ENCODE measurements at regions of chr7 and their contacts with region 1.

Region 1: DNA sequence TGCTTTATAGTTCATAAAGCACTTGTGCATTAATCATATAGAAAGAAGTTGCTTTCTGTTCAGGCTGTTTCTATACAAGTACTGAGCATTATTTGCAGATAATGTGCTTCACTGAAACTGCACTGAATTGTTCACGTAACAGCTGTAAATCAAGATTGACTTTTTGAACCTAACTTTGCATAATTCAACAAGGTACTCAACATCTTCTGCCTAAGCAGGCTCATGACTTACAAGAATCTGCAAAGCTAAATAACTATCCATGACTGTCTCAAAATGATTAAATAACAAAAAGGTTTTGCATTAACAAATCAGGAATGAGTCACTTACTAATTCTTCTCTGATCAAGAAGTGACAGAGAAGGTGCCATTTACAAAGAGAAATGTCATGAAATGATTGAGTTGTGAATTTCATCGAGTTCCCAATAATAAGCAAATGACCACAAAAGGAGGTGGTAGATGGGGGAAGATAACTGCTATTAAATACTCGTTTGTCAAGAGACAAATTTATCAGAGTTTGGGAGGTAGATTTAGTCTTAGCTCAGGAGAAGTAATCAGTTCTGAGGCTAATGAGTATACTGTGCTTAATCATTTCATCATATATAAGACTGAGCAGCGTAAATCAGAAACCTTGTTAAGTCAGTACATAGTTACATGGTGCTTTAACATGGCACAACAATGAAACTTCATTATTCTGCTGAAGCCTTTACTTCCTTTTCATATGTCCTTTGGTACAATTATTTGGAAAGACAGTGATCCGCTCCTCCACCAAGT is 161.3 kb upstream of the LRRN3 start:
- DNase-seq: no peak
- H3K4me3 ChIP-seq: no peak overlapping the region
- H3K4me3 Mint-ChIP-seq: no peak overlapping the region
- H3K27ac ChIP-seq: no peak overlapping the region
- H3K27ac Mint-ChIP-seq: no peak overlapping the region
- H3K4me1 ChIP-seq: no peaks in the 10 kb centered on the region
- H3K4me1 Mint-ChIP-seq: peaks cover 0 to 20% (median 0%) of the 10 kb centered on the region in 3 donors
- H3K27me3 ChIP-seq: no peaks in the 10 kb centered on the region
- H3K27me3 Mint-ChIP-seq: no peaks in the 10 kb centered on the region

Region 2: GRCh38 chr7:111067251-111067650 is 137.6 kb after region 1 on chr7:
- CTCF ChIA-PET with region 1: no interaction called
- POLR2A ChIA-PET with region 1: interaction called, 10 read pairs
- DNase-seq: no peak
- H3K4me3 ChIP-seq: no peak overlapping the region
- H3K4me3 Mint-ChIP-seq: no peak overlapping the region
- H3K27ac ChIP-seq: no peak overlapping the region
- H3K27ac Mint-ChIP-seq: no peak overlapping the region
- H3K4me1 ChIP-seq: no peaks in the 10 kb centered on the region
- H3K4me1 Mint-ChIP-seq: peaks cover 2 to 9% (median 6%) of the 10 kb centered on the region in 3 donors
- H3K27me3 ChIP-seq: no peaks in the 10 kb centered on the region
- H3K27me3 Mint-ChIP-seq: no peaks in the 10 kb centered on the region